ENCODE measurements at regions of chr5 and their contacts with region 1.

Region 1: GRCh38 chr5:79636981-79637733 is 24.9 kb downstream of the TENT2 start:
- DNase-seq: no peak
- ATAC-seq: no peak
- H3K4me3 ChIP-seq: no peak overlapping the region
- H3K27ac ChIP-seq: no peak overlapping the region
- H3K4me1 ChIP-seq: peaks cover 0 to 18% (median 4%) of the 10 kb centered on the region in 9 donors
- H3K27me3 ChIP-seq: no peaks in the 10 kb centered on the region
- CTCF ChIP-seq: no peak

Region 2: GRCh38 chr5:80453366-80453765 is 816.2 kb after region 1 on chr5:
- intact Hi-C with region 1: loop called in 1 of 10 experiments (anchors 10 kb)
- DNase-seq: no peak
- ATAC-seq: no peak
- H3K4me3 ChIP-seq: no peak overlapping the region
- H3K27ac ChIP-seq: no peak overlapping the region
- H3K4me1 ChIP-seq: no peaks in the 10 kb centered on the region
- H3K27me3 ChIP-seq: no peaks in the 10 kb centered on the region
- CTCF ChIP-seq: no peak

Measured in heart right ventricle (tissue), 16 donors.